Transverse colon (tissue), 4 donors: ENCODE measurements at regions of chr3 and their contacts with region 1.

Region 1: GRCh38 chr3:61561374-61562041 is at the start of gene PTPRG:
- DNase-seq: peak; percentile 89
- H3K4me3 ChIP-seq: peak within 1 kb of the TSS; percentile 79 to 97 (median 86)
- H3K27ac ChIP-seq: peak within 1 kb of the TSS; percentile 95 to 98 (median 96)
- H3K4me1 ChIP-seq: peaks cover 0 to 22% (median 10%) of the 10 kb centered on the region in 4 donors
- H3K27me3 ChIP-seq: peaks cover 17% of the 10 kb centered on the region
- CTCF ChIP-seq: no peak
- EP300 ChIP-seq: no peak
- POLR2A ChIP-seq: peak; percentile 67
- total RNA-seq, gene PTPRG: 29.2 to 83.4 (median 41.6) TPM

Region 2: DNA sequence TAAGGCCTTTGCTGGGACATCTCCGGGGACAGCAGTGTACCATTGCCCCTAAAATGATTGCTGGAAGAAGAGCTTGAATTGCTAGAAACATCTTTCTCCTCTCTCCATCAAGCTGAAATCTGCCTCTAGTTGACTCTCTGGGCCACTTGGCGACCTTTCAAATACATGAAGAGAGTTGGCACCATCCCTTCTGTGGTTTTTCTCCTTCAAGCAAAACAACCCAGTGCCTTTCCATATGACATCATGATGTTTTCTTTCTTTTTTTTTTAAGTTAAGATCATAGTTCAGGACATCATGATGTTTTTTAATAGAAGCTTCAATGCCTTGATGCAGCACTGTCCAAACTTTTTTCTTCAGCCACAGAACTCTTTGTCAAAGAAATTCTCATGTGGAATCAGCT is 144.2 kb before region 1 on chr3:
- in situ Hi-C with region 1: no loop called
- intact Hi-C with region 1: no loop called
- DNase-seq: no peak
- H3K4me3 ChIP-seq: no peak overlapping the region
- H3K27ac ChIP-seq: no peak overlapping the region
- H3K4me1 ChIP-seq: no peaks in the 10 kb centered on the region
- H3K27me3 ChIP-seq: no peaks in the 10 kb centered on the region
- CTCF ChIP-seq: no peak
- EP300 ChIP-seq: no peak
- POLR2A ChIP-seq: no peak

Region 3: GRCh38 chr3:61452535-61453090 is 108.9 kb before region 1 on chr3:
- in situ Hi-C with region 1: loop called in 1 of 4 experiments (anchors 25 kb)
- intact Hi-C with region 1: no loop called
- DNase-seq: no peak
- H3K4me3 ChIP-seq: no peak overlapping the region
- H3K27ac ChIP-seq: no peak overlapping the region
- H3K4me1 ChIP-seq: peaks cover 0 to 12% (median 0%) of the 10 kb centered on the region in 4 donors
- H3K27me3 ChIP-seq: no peaks in the 10 kb centered on the region
- CTCF ChIP-seq: no peak
- EP300 ChIP-seq: no peak
- POLR2A ChIP-seq: no peak

Region 4: DNA sequence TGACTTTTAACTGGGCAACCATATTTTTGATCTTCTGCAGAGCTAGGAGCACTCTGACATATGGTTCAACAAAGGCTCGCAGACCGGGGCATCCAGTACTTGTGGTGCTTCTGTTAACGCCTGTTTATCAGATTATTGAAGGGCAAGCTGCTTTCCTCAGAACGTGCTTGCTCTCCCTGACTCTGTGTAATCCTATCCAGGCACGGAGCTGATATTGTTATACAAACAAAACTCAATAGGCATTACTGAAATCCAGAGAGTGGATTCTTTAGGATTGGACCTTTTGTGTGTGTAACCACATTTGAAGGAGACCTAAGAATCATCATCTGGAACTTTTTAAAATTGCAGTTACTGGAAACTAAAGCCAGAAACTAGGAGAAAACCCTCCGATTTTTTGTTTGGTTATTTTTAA is 246.4 kb after region 1 on chr3:
- in situ Hi-C with region 1: no loop called
- intact Hi-C with region 1: loop called (anchors 5 kb)
- DNase-seq: no peak
- H3K4me3 ChIP-seq: no peak overlapping the region
- H3K27ac ChIP-seq: peak overlapping the region; percentile 43 to 76 (median 70)
- H3K4me1 ChIP-seq: peaks cover 26 to 64% (median 45%) of the 10 kb centered on the region in 4 donors
- H3K27me3 ChIP-seq: no peaks in the 10 kb centered on the region
- CTCF ChIP-seq: no peak
- EP300 ChIP-seq: no peak
- POLR2A ChIP-seq: no peak

Region 5: DNA sequence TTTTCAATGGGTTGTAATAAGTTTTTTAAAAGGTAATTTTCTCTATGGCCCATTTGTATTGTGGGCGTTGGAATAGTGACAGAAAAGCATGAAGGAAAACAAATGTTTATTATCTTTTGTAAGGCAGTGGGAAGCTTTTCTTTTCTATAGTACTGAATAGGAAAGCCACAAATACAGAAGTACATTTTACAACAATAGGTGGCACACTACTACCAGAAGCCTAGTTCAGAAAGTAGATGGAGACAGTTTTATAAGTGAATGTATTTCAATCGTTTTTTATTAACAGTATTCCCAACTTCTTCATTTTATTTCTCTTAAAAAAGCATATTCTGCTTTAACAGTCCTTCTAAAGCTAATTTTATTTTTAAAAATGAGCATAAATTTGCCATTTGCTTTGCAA is 296.5 kb after region 1 on chr3:
- in situ Hi-C with region 1: loop called in 2 of 4 experiments (anchors 10 to 25 kb)
- intact Hi-C with region 1: no loop called
- DNase-seq: no peak
- H3K4me3 ChIP-seq: no peak overlapping the region
- H3K27ac ChIP-seq: no peak overlapping the region
- H3K4me1 ChIP-seq: peaks cover 0 to 15% (median 7%) of the 10 kb centered on the region in 4 donors
- H3K27me3 ChIP-seq: no peaks in the 10 kb centered on the region
- CTCF ChIP-seq: peak in 4 of 5 experiments; percentile 30 to 45 (median 36)
- EP300 ChIP-seq: no peak
- POLR2A ChIP-seq: no peak

Region 6: GRCh38 chr3:61894988-61895935 is 333.8 kb after region 1 on chr3:
- in situ Hi-C with region 1: no loop called
- intact Hi-C with region 1: no loop called
- DNase-seq: peak; percentile 87
- H3K4me3 ChIP-seq: no peak overlapping the region
- H3K27ac ChIP-seq: peak overlapping the region; percentile 59 to 72 (median 70)
- H3K4me1 ChIP-seq: peaks cover 4 to 34% (median 18%) of the 10 kb centered on the region in 4 donors
- H3K27me3 ChIP-seq: no peaks in the 10 kb centered on the region
- CTCF ChIP-seq: peak in 1 of 5 experiments; percentile 34
- EP300 ChIP-seq: no peak
- POLR2A ChIP-seq: no peak

Region 7: DNA sequence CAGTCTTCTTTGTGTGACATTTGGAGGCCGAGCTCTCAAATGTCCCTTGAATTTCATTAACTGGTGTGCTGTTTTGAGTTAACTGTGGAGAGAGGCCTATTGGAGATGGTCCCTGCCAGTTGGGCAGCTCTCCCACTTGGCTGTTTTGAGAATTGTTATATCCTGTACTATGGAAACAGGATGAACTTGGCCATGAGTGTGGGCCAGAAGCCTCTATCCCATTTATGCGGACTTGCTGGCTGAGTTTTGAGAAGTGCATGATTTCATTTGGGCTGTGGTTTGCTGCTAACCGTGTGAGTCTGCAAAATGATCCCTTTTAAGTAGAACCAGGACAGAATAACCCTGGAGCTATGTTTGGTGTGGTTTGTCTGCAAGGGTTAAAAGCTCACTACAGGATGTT is 365.8 kb after region 1 on chr3:
- in situ Hi-C with region 1: loop called in 1 of 4 experiments (anchors 25 kb)
- intact Hi-C with region 1: loop called (anchors 10 kb)
- DNase-seq: peak; percentile 42
- H3K4me3 ChIP-seq: no peak overlapping the region
- H3K27ac ChIP-seq: peak overlapping the region; percentile 33 to 59 (median 57)
- H3K4me1 ChIP-seq: peaks cover 0 to 34% (median 6%) of the 10 kb centered on the region in 4 donors
- H3K27me3 ChIP-seq: no peaks in the 10 kb centered on the region
- CTCF ChIP-seq: no peak
- EP300 ChIP-seq: no peak
- POLR2A ChIP-seq: no peak

Region 8: GRCh38 chr3:61936344-61936937 is 374.9 kb after region 1 on chr3:
- in situ Hi-C with region 1: loop called in 1 of 4 experiments (anchors 25 kb)
- intact Hi-C with region 1: no loop called
- DNase-seq: peak; percentile 13
- H3K4me3 ChIP-seq: no peak overlapping the region
- H3K27ac ChIP-seq: peak overlapping the region in 1 of 4 donors; percentile 4
- H3K4me1 ChIP-seq: peaks cover 0 to 12% (median 2%) of the 10 kb centered on the region in 4 donors
- H3K27me3 ChIP-seq: no peaks in the 10 kb centered on the region
- CTCF ChIP-seq: peak in 3 of 5 experiments; percentile 11 to 26 (median 22)
- EP300 ChIP-seq: no peak
- POLR2A ChIP-seq: no peak

Region 9: DNA sequence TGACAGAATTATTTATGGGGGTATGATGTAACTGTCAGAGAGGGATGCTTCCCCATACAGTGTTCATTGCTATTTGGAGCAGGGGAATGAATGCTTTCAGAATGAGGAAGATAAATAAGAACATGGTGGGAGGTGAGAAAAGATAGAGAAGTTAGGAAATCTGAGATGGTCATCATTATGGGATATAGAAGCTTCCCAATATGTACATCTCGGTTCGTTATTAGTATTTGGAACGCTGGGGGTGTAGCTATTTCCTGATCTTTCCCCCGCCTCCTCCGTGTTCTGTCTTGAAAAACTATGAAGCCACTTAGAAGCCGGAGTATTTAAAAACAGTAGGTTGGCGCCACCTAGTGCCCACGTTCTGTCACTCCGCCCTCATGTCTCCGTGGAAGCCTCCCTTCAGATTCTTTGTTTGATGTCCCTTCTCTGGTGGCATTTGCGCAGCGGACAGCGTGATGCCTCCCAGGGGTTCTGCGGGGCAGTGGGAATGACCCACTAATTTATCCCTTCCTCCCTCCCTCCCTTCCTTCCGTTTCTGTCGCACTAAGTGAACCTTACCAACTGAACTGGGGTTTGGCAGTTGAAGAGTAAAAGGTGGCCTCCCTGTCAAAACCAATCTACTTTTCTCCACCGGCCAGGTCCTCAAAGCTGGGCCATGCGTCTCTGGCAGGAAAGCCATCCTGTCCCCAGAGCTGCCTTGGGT is 627.3 kb after region 1 on chr3:
- in situ Hi-C with region 1: loop called (anchors 10 to 25 kb)
- intact Hi-C with region 1: loop called (anchors 2 kb)
- DNase-seq: peak; percentile 76
- H3K4me3 ChIP-seq: no peak overlapping the region
- H3K27ac ChIP-seq: no peak overlapping the region
- H3K4me1 ChIP-seq: no peaks in the 10 kb centered on the region
- H3K27me3 ChIP-seq: no peaks in the 10 kb centered on the region
- CTCF ChIP-seq: peak; percentile 79 to 84 (median 81)
- EP300 ChIP-seq: no peak
- POLR2A ChIP-seq: no peak